Activated CD8-positive, alpha-beta memory T cell treated with anti-CD3 and anti-CD28 coated beads, Interleukin-2, amount 10 ng/mL, durations not matched to agents 7 days and 5 days (primary cell): ENCODE measurements at regions of chr1 and their contacts with region 1.

Region 1: GRCh38 chr1:23108918-23109533 is 59.6 kb downstream of the LUZP1 start:
- DNase-seq: no peak
- ATAC-seq: no peak
- H3K4me3 Mint-ChIP-seq: no peak overlapping the region
- H3K27ac Mint-ChIP-seq: no peak overlapping the region
- H3K4me1 Mint-ChIP-seq: peaks cover 51% of the 10 kb centered on the region
- H3K27me3 Mint-ChIP-seq: no peaks in the 10 kb centered on the region

Region 2: DNA sequence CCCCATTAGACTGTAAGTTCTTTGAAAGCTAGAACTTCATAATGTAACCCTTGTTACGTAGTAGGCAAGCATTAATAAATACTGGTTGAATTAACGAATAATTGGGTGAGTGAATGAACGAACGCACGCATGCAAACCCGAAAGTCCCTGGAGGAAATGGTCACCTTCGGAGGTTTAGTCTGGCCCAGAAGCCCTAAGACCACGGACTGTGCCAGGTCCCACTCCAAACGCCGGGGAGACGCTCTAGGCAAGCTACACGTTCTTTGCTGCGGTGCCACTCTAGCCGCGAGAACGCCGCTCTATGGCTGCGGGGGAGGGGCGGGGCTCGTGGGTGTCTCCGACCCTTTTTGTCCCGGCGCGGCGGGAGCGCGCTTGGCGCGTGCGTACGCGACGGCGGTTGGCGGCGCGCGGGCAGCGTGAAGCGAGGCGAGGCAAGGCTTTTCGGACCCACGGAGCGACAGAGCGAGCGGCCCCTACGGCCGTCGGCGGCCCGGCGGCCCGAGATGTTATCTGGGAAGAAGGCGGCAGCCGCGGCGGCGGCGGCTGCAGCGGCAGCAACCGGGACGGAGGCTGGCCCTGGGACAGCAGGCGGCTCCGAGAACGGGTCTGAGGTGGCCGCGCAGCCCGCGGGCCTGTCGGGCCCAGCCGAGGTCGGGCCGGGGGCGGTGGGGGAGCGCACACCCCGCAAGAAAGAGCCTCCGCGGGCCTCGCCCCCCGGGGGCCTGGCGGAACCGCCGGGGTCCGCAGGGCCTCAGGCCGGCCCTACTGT is 89.7 kb before region 1 on chr1 and contains the start of gene KDM1A:
- CTCF ChIA-PET with region 1: no interaction called
- DNase-seq: peak; percentile 96
- ATAC-seq: peak; percentile 97
- H3K4me3 Mint-ChIP-seq: peak within 1 kb of the TSS; percentile 92
- H3K27ac Mint-ChIP-seq: peak within 1 kb of the TSS; percentile 87
- H3K4me1 Mint-ChIP-seq: peaks cover 38% of the 10 kb centered on the region
- H3K27me3 Mint-ChIP-seq: no peaks in the 10 kb centered on the region
- total RNA-seq, gene KDM1A: 58.4 to 59.4 TPM

Region 3: DNA sequence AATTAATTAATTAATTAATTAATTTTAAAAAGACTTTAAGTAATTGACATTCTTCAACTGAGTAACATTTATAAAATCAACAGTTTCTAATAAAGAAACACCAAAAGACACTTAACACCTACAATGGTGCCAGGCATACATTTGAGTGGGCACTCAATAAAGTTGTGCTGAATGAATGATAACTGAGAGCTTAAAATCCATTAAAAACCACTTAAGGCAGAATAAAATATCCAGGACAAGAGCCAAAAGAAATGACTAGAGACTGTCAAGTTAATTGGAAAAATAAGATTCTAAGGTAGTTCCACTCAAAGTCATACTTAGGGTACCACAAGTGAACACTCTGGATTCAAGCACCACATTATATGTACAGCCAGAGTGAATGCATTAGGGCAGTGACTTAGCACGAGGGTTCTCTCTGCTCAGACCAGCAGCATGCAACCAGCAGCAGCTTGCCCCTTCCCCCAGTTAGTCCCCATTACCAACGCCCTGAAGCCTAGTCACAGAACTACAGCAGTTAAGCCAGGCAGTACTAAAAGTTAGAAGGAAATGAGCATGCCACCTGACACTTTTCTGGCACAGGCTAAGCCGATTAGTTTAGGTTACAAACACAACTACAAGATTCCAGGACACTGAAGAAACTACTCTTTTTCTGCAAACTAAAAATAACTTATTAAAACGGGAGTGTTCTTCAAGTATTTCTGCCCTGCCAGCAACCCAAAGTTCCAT is 13.2 kb after region 1 on chr1:
- CTCF ChIA-PET with region 1: interaction called, 22 read pairs
- DNase-seq: no peak
- ATAC-seq: no peak
- H3K4me3 Mint-ChIP-seq: no peak overlapping the region
- H3K27ac Mint-ChIP-seq: no peak overlapping the region
- H3K4me1 Mint-ChIP-seq: peaks cover 44% of the 10 kb centered on the region
- H3K27me3 Mint-ChIP-seq: no peaks in the 10 kb centered on the region